ENCODE measurements at regions of chr4 and their contacts with region 1.

Region 1: GRCh38 chr4:114866901-114867670 is 246.3 kb downstream of the NDST4 start:
- DNase-seq: no peak
- H3K4me3 ChIP-seq: no peak overlapping the region
- H3K4me3 Mint-ChIP-seq: no peak overlapping the region
- H3K27ac Mint-ChIP-seq: no peak overlapping the region
- H3K4me1 ChIP-seq: no peaks in the 10 kb centered on the region
- H3K4me1 Mint-ChIP-seq: no peaks in the 10 kb centered on the region
- H3K27me3 ChIP-seq: no peaks in the 10 kb centered on the region
- H3K27me3 Mint-ChIP-seq: no peaks in the 10 kb centered on the region
- CTCF ChIP-seq: no peak

Region 2: GRCh38 chr4:114302472-114302871 is 564.6 kb before region 1 on chr4:
- CTCF ChIA-PET with region 1: interaction called, 10 read pairs
- POLR2A ChIA-PET with region 1: no interaction called
- intact Hi-C with region 1: no loop called
- DNase-seq: no peak
- H3K4me3 ChIP-seq: no peak overlapping the region
- H3K4me3 Mint-ChIP-seq: no peak overlapping the region
- H3K27ac Mint-ChIP-seq: no peak overlapping the region
- H3K4me1 ChIP-seq: no peaks in the 10 kb centered on the region
- H3K4me1 Mint-ChIP-seq: no peaks in the 10 kb centered on the region
- H3K27me3 ChIP-seq: no peaks in the 10 kb centered on the region
- H3K27me3 Mint-ChIP-seq: no peaks in the 10 kb centered on the region
- CTCF ChIP-seq: no peak

Region 3: GRCh38 chr4:114577386-114577785 is 289.7 kb before region 1 on chr4:
- CTCF ChIA-PET with region 1: no interaction called
- POLR2A ChIA-PET with region 1: no interaction called
- intact Hi-C with region 1: no loop called
- DNase-seq: no peak
- H3K4me3 ChIP-seq: no peak overlapping the region
- H3K4me3 Mint-ChIP-seq: no peak overlapping the region
- H3K27ac Mint-ChIP-seq: no peak overlapping the region
- H3K4me1 ChIP-seq: peaks cover 5% of the 10 kb centered on the region
- H3K4me1 Mint-ChIP-seq: no peaks in the 10 kb centered on the region
- H3K27me3 ChIP-seq: no peaks in the 10 kb centered on the region
- H3K27me3 Mint-ChIP-seq: no peaks in the 10 kb centered on the region
- CTCF ChIP-seq: no peak

Region 4: DNA sequence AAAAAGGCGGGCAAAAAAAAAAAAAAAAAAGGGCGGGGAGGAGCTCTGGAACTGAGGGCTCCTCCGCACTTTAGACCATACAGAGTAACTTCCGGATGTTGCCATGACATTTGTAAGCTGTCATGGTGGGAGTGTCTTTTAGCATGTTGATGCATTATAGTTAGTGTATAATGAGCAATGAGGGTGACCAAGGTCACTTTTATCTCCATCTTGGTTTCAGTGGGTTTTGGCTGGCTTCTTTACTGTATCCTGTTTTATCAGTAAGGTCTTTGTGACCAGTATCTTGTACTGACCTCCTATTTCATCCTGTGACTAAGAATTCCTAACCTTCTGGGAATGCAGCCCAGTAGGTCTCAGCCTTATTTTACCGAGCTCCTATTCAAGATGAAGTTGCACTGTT is 75.1 kb before region 1 on chr4:
- CTCF ChIA-PET with region 1: no interaction called
- POLR2A ChIA-PET with region 1: no interaction called
- intact Hi-C with region 1: no loop called
- DNase-seq: no peak
- H3K4me3 ChIP-seq: no peak overlapping the region
- H3K4me3 Mint-ChIP-seq: no peak overlapping the region
- H3K27ac Mint-ChIP-seq: no peak overlapping the region
- H3K4me1 ChIP-seq: no peaks in the 10 kb centered on the region
- H3K4me1 Mint-ChIP-seq: no peaks in the 10 kb centered on the region
- H3K27me3 ChIP-seq: no peaks in the 10 kb centered on the region
- H3K27me3 Mint-ChIP-seq: peaks cover 7% of the 10 kb centered on the region
- CTCF ChIP-seq: no peak

Region 5: GRCh38 chr4:114890773-114891172 is 23.7 kb after region 1 on chr4:
- CTCF ChIA-PET with region 1: no interaction called
- POLR2A ChIA-PET with region 1: no interaction called
- intact Hi-C with region 1: no loop called
- DNase-seq: no peak
- H3K4me3 ChIP-seq: no peak overlapping the region
- H3K4me3 Mint-ChIP-seq: no peak overlapping the region
- H3K27ac Mint-ChIP-seq: no peak overlapping the region
- H3K4me1 ChIP-seq: no peaks in the 10 kb centered on the region
- H3K4me1 Mint-ChIP-seq: no peaks in the 10 kb centered on the region
- H3K27me3 ChIP-seq: no peaks in the 10 kb centered on the region
- H3K27me3 Mint-ChIP-seq: no peaks in the 10 kb centered on the region
- CTCF ChIP-seq: no peak